GM12878 (cell line): ENCODE measurements at regions of chr1 and their contacts with region 1.

Region 1: DNA sequence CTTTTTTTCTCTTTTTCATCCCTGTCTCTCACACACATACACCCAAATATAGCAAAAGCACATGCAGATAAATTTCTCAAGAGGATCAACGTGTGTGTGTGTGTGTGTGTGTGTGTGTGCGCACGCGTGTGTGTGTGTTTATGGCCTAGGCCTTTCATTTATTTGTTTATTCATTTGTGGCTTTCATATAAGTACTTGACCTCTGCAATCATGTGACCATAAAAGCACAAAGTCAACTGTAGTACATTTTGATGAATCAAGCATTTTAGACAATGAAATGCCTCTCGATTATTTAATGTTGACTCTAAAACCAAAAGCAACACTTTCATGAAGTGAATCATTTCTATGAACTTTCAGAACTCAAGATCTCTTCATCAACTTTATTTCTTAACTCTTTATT is 194.1 kb upstream of the ADGRL2 start:
- DNase-seq: no peak
- ATAC-seq: no peak
- H3K4me3 ChIP-seq: no peak overlapping the region
- H3K27ac ChIP-seq: no peak overlapping the region
- H3K4me1 ChIP-seq: no peaks in the 10 kb centered on the region
- H3K27me3 ChIP-seq: no peaks in the 10 kb centered on the region
- CTCF ChIP-seq: no peak
- EP300 ChIP-seq: no peak
- POLR2A ChIP-seq: no peak
- RAD21 ChIP-seq: no peak

Region 2: DNA sequence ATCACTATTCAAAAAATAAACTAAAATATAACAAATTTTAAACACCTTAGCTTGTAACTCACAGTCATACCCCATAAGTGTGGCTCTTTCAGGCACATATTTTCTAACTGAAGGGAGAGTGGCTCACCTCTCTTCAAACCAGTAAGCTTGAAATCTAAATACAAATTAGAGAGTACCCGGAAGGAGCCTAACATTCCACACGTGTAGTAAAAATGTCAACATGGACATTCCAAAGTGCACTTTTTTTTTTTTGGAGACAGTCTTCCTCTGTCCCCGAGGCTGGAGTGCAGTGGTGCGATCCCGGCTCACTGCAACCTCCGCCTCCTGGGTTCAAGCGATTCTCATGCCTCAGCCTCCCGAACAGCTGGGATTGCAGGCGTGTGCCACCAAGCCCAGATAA is 81.6 kb before region 1 on chr1:
- CTCF ChIA-PET with region 1: no interaction called
- POLR2A ChIA-PET with region 1: no interaction called
- RAD21 ChIA-PET with region 1: no interaction called
- SMC1A ChIA-PET with region 1: no interaction called
- in situ Hi-C with region 1: no loop called
- intact Hi-C with region 1: no loop called
- DNase-seq: no peak
- ATAC-seq: no peak
- H3K4me3 ChIP-seq: no peak overlapping the region
- H3K27ac ChIP-seq: no peak overlapping the region
- H3K4me1 ChIP-seq: no peaks in the 10 kb centered on the region
- H3K27me3 ChIP-seq: no peaks in the 10 kb centered on the region
- CTCF ChIP-seq: no peak
- EP300 ChIP-seq: no peak
- POLR2A ChIP-seq: no peak
- RAD21 ChIP-seq: no peak

Region 3: DNA sequence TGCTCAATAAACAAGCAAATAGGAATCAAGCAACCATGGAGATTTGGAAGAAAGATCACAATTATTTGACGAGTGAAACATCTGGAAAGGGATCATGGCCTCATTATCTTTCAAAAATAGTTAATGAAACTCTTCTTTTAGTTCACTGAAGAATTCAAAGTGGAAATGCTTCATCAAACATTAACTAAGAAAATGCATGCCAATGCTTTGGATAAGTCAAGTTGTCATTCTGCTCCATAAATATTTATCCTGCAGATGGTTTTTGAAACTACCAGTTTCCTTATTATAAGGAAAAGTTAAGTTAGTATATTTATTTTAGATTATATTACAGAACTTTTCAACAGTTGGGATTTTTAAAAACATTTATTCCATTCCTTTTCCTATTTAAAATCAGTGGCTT is 12.4 kb before region 1 on chr1:
- CTCF ChIA-PET with region 1: interaction called, 5 read pairs
- POLR2A ChIA-PET with region 1: no interaction called
- RAD21 ChIA-PET with region 1: interaction called, 11 read pairs
- SMC1A ChIA-PET with region 1: interaction called, 15 read pairs
- in situ Hi-C with region 1: no loop called
- intact Hi-C with region 1: no loop called
- DNase-seq: no peak
- ATAC-seq: no peak
- H3K4me3 ChIP-seq: no peak overlapping the region
- H3K27ac ChIP-seq: no peak overlapping the region
- H3K4me1 ChIP-seq: peaks cover 9% of the 10 kb centered on the region
- H3K27me3 ChIP-seq: no peaks in the 10 kb centered on the region
- CTCF ChIP-seq: no peak
- EP300 ChIP-seq: no peak
- POLR2A ChIP-seq: no peak
- RAD21 ChIP-seq: no peak